Left ventricle myocardium superior (tissue), 1 donor: ENCODE measurements at regions of chr9 and their contacts with region 1.

Region 1: GRCh38 chr9:36441966-36442365 is 41.9 kb upstream of the RNF38 start:
- DNase-seq: no peak
- ATAC-seq: no peak

Region 2: GRCh38 chr9:36023260-36024048 is 418.5 kb before region 1 on chr9:
- intact Hi-C with region 1: no loop called
- DNase-seq: peak; percentile 51
- ATAC-seq: peak; percentile 62

Region 3: GRCh38 chr9:36407122-36407723 is 34.7 kb before region 1 on chr9:
- intact Hi-C with region 1: loop called (anchors 5 kb)
- DNase-seq: peak; percentile 48
- ATAC-seq: peak; percentile 85

Region 4: GRCh38 chr9:36704148-36704547 is 262.2 kb after region 1 on chr9:
- intact Hi-C with region 1: no loop called
- DNase-seq: no peak
- ATAC-seq: no peak